ENCODE measurements at regions of chr3 and their contacts with region 1.

Region 1: GRCh38 chr3:195542698-195543499 is at the start of gene PPP1R2:
- DNase-seq: peak; percentile 94 to 99 (median 97)
- ATAC-seq: peak; percentile 93
- H3K4me3 ChIP-seq: peak within 1 kb of the TSS; percentile 62
- H3K27ac ChIP-seq: peak within 1 kb of the TSS; percentile 86
- H3K4me1 ChIP-seq: peaks cover 17 to 30% of the 10 kb centered on the region in 2 experiments
- H3K27me3 ChIP-seq: no peaks in the 10 kb centered on the region
- CTCF ChIP-seq: no peak
- EP300 ChIP-seq: no peak
- POLR2A ChIP-seq: peak; percentile 95
- RAD21 ChIP-seq: no peak
- polyA plus RNA-seq, gene PPP1R2: 9.4 to 10.5 TPM

Region 2: DNA sequence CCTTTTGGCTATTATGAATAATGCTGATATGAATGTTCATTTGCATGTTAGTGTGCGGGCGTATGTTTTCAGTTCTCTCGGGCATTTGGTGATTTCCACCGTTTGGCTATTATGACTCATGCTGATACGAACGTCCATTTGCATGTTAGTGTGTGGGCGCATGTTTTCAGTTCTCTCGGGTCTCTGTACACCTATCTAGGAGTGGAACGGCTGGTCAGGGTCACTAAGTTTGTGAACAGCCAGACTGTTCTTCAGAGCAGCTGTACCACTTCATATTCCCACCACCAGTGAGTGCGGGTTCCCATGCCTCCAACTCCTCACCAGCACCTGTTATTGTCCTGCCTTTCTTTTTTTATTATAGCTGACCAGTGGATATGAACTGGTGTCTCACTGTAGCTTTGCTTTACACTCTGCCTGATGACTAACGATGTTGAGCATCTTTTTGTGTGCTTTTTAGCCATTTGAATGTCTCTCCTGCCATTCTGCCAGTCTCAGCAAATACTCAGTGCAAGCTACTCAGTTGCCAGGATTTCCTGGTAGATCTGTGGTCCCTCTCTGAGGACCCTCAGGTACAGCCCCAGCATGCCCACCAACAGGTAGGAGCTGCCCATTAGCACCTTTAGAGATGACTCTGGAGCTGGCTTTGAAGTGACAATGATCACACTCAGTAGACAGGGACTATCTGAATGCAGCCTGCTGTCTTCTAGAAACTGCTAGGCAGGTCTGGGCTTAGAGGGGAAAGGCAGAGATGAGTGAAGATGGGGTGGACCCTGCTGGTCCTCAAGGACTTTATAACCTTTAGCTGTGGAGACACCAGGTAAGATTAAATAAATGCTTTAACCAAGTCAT is 413.0 kb before region 1 on chr3:
- CTCF ChIA-PET with region 1: no interaction called
- POLR2A ChIA-PET with region 1: no interaction called
- in situ Hi-C with region 1: no loop called
- intact Hi-C with region 1: no loop called
- DNase-seq: peak in 1 of 4 experiments; percentile 47
- ATAC-seq: peak; percentile 24; the same call in 1 of the 3 replicates
- H3K4me3 ChIP-seq: no peak overlapping the region
- H3K27ac ChIP-seq: peak overlapping the region; percentile 32; the same call in 1 of the 3 replicates
- H3K4me1 ChIP-seq: peaks cover 3 to 6% of the 10 kb centered on the region in 2 experiments; a peak in 3 of 5 replicates
- H3K27me3 ChIP-seq: no peaks in the 10 kb centered on the region
- CTCF ChIP-seq: no peak
- EP300 ChIP-seq: peak; percentile 8; the same call in 1 of the 2 replicates
- POLR2A ChIP-seq: no peak
- RAD21 ChIP-seq: no peak

Region 3: GRCh38 chr3:195532834-195533233 is 10.1 kb before region 1 on chr3:
- CTCF ChIA-PET with region 1: no interaction called
- POLR2A ChIA-PET with region 1: interaction called, 22 read pairs
- in situ Hi-C with region 1: no loop called
- intact Hi-C with region 1: no loop called
- DNase-seq: no peak
- ATAC-seq: no peak
- H3K4me3 ChIP-seq: no peak overlapping the region
- H3K27ac ChIP-seq: no peak overlapping the region
- H3K4me1 ChIP-seq: peaks cover 0 to 2% of the 10 kb centered on the region in 2 experiments; a peak in 1 of 5 replicates
- H3K27me3 ChIP-seq: no peaks in the 10 kb centered on the region
- CTCF ChIP-seq: no peak
- EP300 ChIP-seq: no peak
- POLR2A ChIP-seq: no peak
- RAD21 ChIP-seq: no peak

Measured in K562 (cell line).